Activated naive CD4-positive, alpha-beta T cell treated with anti-CD3 and anti-CD28 coated beads, Interleukin-2, amount 10 ng/mL, durations not matched to agents 7 days and 5 days (primary cell): ENCODE measurements at regions of chr5 and their contacts with region 1.

Region 1: GRCh38 chr5:172450861-172451695 is 3.2 kb downstream of the SH3PXD2B start:
- DNase-seq: peak; percentile 61
- H3K4me3 Mint-ChIP-seq: no peak overlapping the region
- H3K27ac Mint-ChIP-seq: no peak overlapping the region
- H3K4me1 Mint-ChIP-seq: peaks cover 12% of the 10 kb centered on the region
- H3K27me3 Mint-ChIP-seq: peaks cover 70% of the 10 kb centered on the region

Region 2: GRCh38 chr5:172437445-172438308 is 13.4 kb before region 1 on chr5:
- CTCF ChIA-PET with region 1: interaction called, 15 read pairs
- DNase-seq: no peak
- H3K4me3 Mint-ChIP-seq: no peak overlapping the region
- H3K27ac Mint-ChIP-seq: no peak overlapping the region
- H3K4me1 Mint-ChIP-seq: no peaks in the 10 kb centered on the region
- H3K27me3 Mint-ChIP-seq: peaks cover 32% of the 10 kb centered on the region